ENCODE measurements at regions of chr9 and their contacts with region 1.

Region 1: DNA sequence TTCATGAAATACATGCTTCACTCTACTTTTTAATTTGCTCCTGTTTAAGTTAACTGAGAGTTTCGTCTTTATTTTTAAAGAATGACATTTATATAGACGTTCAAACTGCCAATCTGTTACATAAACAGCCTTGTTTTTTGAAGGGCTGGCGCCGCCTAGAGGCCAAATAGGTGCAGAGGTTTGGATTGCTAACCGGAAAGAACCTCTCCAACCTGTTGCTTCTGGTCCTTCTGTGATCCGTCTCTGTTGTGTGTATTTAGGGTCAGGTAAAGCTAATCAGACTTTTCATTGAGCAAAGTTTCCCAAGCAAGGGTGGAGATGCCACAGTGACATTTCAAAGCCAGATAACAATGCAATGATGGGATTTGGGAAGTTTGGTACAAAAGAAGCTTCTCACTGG is 39.5 kb upstream of the GLIS3 start:
- DNase-seq: peak; percentile 58
- H3K4me3 ChIP-seq: no peak overlapping the region
- H3K27ac ChIP-seq: no peak overlapping the region
- H3K27me3 ChIP-seq: no peaks in the 10 kb centered on the region
- CTCF ChIP-seq: peak; percentile 99

Region 2: DNA sequence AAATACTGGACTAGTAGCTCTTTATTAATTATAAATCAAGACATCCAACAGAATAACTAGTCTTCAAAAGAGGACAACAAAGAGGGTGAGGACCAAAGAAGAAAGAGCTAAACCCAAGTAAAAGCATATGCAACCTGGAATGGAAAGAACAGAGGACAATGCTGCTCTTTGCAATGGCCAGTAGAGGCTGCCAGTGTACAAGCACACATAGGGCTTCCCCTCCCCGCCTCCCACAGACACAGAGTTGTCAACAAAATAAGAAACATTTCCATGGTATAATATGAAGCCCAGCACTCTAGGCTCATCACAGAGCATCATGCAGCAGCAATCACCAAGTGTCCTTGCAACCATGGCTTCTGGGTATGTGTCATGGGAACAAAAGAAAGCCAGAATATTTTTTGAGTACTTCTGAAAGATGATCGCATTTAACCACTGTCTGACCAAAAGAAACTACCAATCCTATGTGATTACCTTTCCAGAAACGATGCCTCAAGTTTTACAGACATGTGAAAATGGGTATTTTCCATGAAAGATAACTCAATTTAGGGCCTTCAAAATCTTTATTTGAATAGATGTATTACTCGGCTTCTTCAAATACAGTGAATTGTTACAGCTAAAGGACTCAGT is 871.7 kb before region 1 on chr9:
- CTCF ChIA-PET with region 1: interaction called, 10 read pairs
- POLR2A ChIA-PET with region 1: no interaction called
- DNase-seq: peak; percentile 34
- H3K4me3 ChIP-seq: no peak overlapping the region
- H3K27ac ChIP-seq: no peak overlapping the region
- H3K27me3 ChIP-seq: no peaks in the 10 kb centered on the region
- CTCF ChIP-seq: peak; percentile 99

Region 3: DNA sequence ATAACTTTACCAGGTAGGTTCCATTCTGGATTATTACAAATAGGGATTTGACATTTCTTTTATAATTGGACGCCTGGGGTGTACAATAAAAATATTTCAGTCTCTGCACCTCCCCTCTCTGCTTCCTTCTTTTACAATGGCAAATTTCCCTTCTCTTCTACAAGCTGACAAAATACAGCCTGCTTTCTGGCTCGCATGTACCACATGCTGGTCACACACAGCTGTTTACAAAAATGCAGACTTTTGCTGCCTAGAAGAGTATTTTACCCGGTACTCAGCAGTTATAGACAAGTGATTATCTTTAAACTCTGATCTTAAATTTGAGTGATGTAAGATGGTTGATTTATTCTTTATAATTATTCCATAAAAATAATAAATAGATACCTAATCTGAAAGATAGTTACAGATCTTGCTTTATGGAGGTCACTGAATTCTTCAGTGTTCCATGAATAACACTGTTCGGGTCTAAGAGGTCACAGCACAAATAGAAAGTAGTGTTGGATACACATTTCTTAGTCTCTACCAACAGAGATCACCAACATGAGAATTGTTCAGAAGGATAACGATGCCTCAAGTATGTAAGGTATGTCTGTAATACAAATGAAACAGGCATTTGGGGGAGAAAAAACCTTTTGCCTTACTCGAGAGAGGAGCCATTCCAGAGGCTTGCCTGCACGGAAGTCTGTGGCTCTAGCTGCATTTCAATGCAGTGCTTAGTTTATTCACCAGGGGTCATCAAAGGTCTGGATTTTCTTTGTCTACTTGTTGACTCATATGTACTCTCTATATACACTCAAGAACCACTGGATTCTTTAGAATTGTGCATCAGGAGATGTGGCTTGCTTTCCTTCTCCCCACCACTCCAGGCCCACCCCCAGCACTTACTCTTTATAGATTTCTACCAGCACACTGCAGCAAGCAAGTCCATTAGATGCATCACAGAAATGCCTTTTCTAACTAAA is 607.0 kb before region 1 on chr9:
- CTCF ChIA-PET with region 1: interaction called, 31 read pairs
- POLR2A ChIA-PET with region 1: no interaction called
- DNase-seq: peak; percentile 76
- H3K4me3 ChIP-seq: peak overlapping the region; percentile 18; the same call in 1 of the 2 replicates
- H3K27ac ChIP-seq: no peak overlapping the region
- H3K27me3 ChIP-seq: no peaks in the 10 kb centered on the region
- CTCF ChIP-seq: peak; percentile 72

Region 4: GRCh38 chr9:4315582-4316215 is 23.7 kb before region 1 on chr9:
- CTCF ChIA-PET with region 1: interaction called, 22 read pairs
- POLR2A ChIA-PET with region 1: no interaction called
- DNase-seq: no peak
- H3K4me3 ChIP-seq: no peak overlapping the region
- H3K27ac ChIP-seq: no peak overlapping the region
- H3K27me3 ChIP-seq: no peaks in the 10 kb centered on the region
- CTCF ChIP-seq: peak; percentile 93

Region 5: GRCh38 chr9:4327504-4328191 is 11.7 kb before region 1 on chr9:
- CTCF ChIA-PET with region 1: interaction called, 14 read pairs
- POLR2A ChIA-PET with region 1: no interaction called
- DNase-seq: peak; percentile 38
- H3K4me3 ChIP-seq: no peak overlapping the region
- H3K27ac ChIP-seq: peak overlapping the region; percentile 25
- H3K27me3 ChIP-seq: peaks cover 2% of the 10 kb centered on the region
- CTCF ChIP-seq: peak; percentile 34

Region 6: GRCh38 chr9:4349816-4350418 is 10.6 kb after region 1 on chr9:
- CTCF ChIA-PET with region 1: interaction called, 29 read pairs
- POLR2A ChIA-PET with region 1: no interaction called
- DNase-seq: no peak
- H3K4me3 ChIP-seq: no peak overlapping the region
- H3K27ac ChIP-seq: no peak overlapping the region
- H3K27me3 ChIP-seq: no peaks in the 10 kb centered on the region
- CTCF ChIP-seq: no peak

Region 7: DNA sequence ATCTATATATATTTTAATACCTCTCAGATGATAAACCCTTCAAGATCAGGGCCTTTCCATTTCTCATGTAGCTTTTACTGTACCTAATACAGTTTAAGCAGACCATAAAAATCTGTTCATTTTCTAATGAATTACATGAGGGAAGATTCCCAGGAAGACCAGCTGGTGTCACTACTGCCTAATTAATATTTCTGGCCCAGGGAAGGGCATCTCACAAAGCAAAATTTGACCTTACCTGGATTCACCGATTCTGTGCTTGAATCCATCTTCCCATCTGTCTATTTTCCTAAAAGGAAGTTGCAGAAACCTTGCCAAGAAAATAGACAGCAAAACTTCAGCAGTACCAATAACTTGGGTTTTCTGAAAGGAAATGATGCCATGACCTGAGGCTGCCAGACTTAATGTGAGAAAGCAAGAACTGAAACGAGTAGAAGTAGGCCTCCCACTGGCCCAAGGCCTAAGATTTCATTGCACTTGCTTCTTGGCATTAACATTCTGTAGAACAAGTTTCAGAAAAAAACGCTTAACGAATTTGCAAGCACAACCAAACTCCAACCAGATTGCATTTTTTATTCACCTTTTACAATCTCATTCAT is 43.5 kb after region 1 on chr9:
- CTCF ChIA-PET with region 1: interaction called, 10 read pairs
- POLR2A ChIA-PET with region 1: no interaction called
- DNase-seq: no peak
- H3K4me3 ChIP-seq: no peak overlapping the region
- H3K27ac ChIP-seq: no peak overlapping the region
- H3K27me3 ChIP-seq: peaks cover 14% of the 10 kb centered on the region
- CTCF ChIP-seq: peak; percentile 47

Region 8: DNA sequence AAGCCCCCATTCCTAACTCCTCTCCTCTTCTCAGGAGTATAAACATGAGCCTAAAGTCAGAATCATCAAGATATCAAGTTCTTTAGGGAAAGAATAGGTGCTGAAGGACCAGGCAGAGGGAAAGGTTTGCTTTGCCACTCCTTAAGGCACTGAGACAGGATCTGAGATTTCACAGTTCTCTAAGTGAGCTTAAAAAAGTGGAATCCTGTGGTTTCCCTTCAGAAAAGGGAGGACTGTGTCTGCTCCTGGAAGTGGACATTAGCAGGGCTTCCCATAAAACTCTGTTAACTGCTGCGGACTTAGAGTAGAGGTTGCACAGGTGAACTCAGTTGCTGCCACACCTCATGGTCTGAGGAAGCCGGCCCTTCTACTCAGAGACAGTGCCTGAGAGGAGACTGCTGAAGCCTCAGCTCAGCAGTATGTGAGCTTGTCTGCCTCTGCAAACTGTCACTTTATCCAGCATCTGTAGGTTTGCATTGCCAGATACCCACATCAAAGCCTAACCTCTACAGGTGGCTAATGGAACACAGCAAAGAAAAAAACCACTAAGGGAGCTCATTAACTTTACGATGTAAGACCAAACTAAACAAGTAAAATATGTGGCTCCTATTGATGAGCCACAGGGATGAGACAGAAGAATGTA is 1332.5 kb after region 1 on chr9:
- CTCF ChIA-PET with region 1: no interaction called
- POLR2A ChIA-PET with region 1: no interaction called
- DNase-seq: no peak
- H3K4me3 ChIP-seq: no peak overlapping the region
- H3K27ac ChIP-seq: no peak overlapping the region
- H3K27me3 ChIP-seq: no peaks in the 10 kb centered on the region
- CTCF ChIP-seq: no peak

Measured in AG04450 (cell line).